Mammary epithelial cell (primary cell): ENCODE measurements at regions of chr6 and their contacts with region 1.

Region 1: GRCh38 chr6:114390176-114390575 is 47.4 kb upstream of the HS3ST5 start:
- DNase-seq: no peak
- H3K4me3 ChIP-seq: no peak overlapping the region
- H3K27ac ChIP-seq: no peak overlapping the region
- H3K4me1 ChIP-seq: no peaks in the 10 kb centered on the region
- H3K27me3 ChIP-seq: no peaks in the 10 kb centered on the region
- CTCF ChIP-seq: no peak

Region 2: GRCh38 chr6:114514153-114514552 is 124.0 kb after region 1 on chr6:
- CTCF ChIA-PET with region 1: interaction called, 22 read pairs
- dilution Hi-C with region 1: no loop called
- in situ Hi-C with region 1: no loop called
- intact Hi-C with region 1: no loop called
- DNase-seq: no peak
- H3K4me3 ChIP-seq: no peak overlapping the region
- H3K27ac ChIP-seq: no peak overlapping the region
- H3K4me1 ChIP-seq: no peaks in the 10 kb centered on the region
- H3K27me3 ChIP-seq: no peaks in the 10 kb centered on the region
- CTCF ChIP-seq: no peak

Region 3: DNA sequence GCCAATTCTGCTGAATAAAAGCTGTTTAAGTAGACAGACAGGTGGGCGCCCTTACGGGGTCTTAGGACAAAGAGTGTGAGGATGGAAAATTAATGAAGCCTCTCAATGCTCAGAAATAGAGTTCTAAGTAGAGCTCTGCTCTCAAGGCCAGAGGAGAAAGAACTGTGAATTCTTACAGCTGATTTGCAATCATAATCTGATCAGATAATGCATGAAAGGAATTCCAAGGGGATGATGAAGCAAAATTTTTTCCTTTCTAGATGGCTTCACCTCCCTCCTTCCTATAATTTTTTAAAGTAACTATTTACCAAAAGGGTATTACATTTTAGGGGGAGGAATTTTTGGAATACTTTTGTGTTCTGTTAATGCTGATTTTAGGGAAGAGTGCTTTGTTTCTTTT is 260.7 kb after region 1 on chr6:
- CTCF ChIA-PET with region 1: no interaction called
- dilution Hi-C with region 1: no loop called
- in situ Hi-C with region 1: no loop called
- intact Hi-C with region 1: no loop called
- DNase-seq: no peak
- H3K4me3 ChIP-seq: no peak overlapping the region
- H3K27ac ChIP-seq: no peak overlapping the region
- H3K4me1 ChIP-seq: no peaks in the 10 kb centered on the region
- H3K27me3 ChIP-seq: no peaks in the 10 kb centered on the region
- CTCF ChIP-seq: no peak